ENCODE measurements at regions of chr20 and their contacts with region 1.

Region 1: GRCh38 chr20:41398408-41398807 is 31.8 kb upstream of the EMILIN3 start:
- DNase-seq: no peak
- H3K4me3 ChIP-seq: no peak overlapping the region
- H3K4me3 Mint-ChIP-seq: no peak overlapping the region
- H3K27ac ChIP-seq: no peak overlapping the region
- H3K27ac Mint-ChIP-seq: peak overlapping the region in 1 of 8 donors; percentile 39
- H3K4me1 ChIP-seq: no peaks in the 10 kb centered on the region
- H3K4me1 Mint-ChIP-seq: no peaks in the 10 kb centered on the region
- H3K27me3 ChIP-seq: no peaks in the 10 kb centered on the region
- H3K27me3 Mint-ChIP-seq: peaks cover 0 to 3% of the 10 kb centered on the region in 2 donors

Region 2: GRCh38 chr20:41047279-41047974 is 351.0 kb before region 1 on chr20:
- CTCF ChIA-PET with region 1: no interaction called
- POLR2A ChIA-PET with region 1: interaction called, 11 read pairs
- DNase-seq: peak in 1 of 5 donors; percentile 13
- H3K4me3 ChIP-seq: peak overlapping the region; percentile 29
- H3K4me3 Mint-ChIP-seq: peak overlapping the region; percentile 48 to 89 (median 80)
- H3K27ac ChIP-seq: peak overlapping the region; percentile 55
- H3K27ac Mint-ChIP-seq: peak overlapping the region; percentile 71 to 94 (median 90)
- H3K4me1 ChIP-seq: peaks cover 81% of the 10 kb centered on the region
- H3K4me1 Mint-ChIP-seq: peaks cover 87 to 95% (median 95%) of the 10 kb centered on the region in 3 donors
- H3K27me3 ChIP-seq: no peaks in the 10 kb centered on the region
- H3K27me3 Mint-ChIP-seq: no peaks in the 10 kb centered on the region

Region 3: GRCh38 chr20:41387444-41387851 is 11.0 kb before region 1 on chr20:
- CTCF ChIA-PET with region 1: no interaction called
- POLR2A ChIA-PET with region 1: no interaction called
- DNase-seq: no peak
- H3K4me3 ChIP-seq: no peak overlapping the region
- H3K4me3 Mint-ChIP-seq: no peak overlapping the region
- H3K27ac ChIP-seq: no peak overlapping the region
- H3K27ac Mint-ChIP-seq: no peak overlapping the region
- H3K4me1 ChIP-seq: no peaks in the 10 kb centered on the region
- H3K4me1 Mint-ChIP-seq: no peaks in the 10 kb centered on the region
- H3K27me3 ChIP-seq: no peaks in the 10 kb centered on the region
- H3K27me3 Mint-ChIP-seq: peaks cover 7 to 26% of the 10 kb centered on the region in 2 donors

Measured in CD8-positive, alpha-beta memory T cell (primary cell).